Ascending aorta (tissue), 2 donors: ENCODE measurements at regions of chr1 and their contacts with region 1.

Region 1: GRCh38 chr1:174743654-174744561 is 255.8 kb upstream of the CACYBP start:
- DNase-seq: no peak
- H3K4me3 ChIP-seq: no peak overlapping the region
- H3K27ac ChIP-seq: no peak overlapping the region
- H3K4me1 ChIP-seq: no peaks in the 10 kb centered on the region
- H3K27me3 ChIP-seq: no peaks in the 10 kb centered on the region
- CTCF ChIP-seq: peak; percentile 33 to 58 (median 48)

Region 2: GRCh38 chr1:174258148-174258550 is 485.8 kb before region 1 on chr1:
- intact Hi-C with region 1: loop called (anchors 2 kb)
- DNase-seq: no peak
- H3K4me3 ChIP-seq: no peak overlapping the region
- H3K27ac ChIP-seq: no peak overlapping the region
- H3K4me1 ChIP-seq: no peaks in the 10 kb centered on the region
- H3K27me3 ChIP-seq: no peaks in the 10 kb centered on the region
- CTCF ChIP-seq: peak; percentile 15 to 43 (median 19)

Region 3: GRCh38 chr1:174671826-174672225 is 72.1 kb before region 1 on chr1:
- intact Hi-C with region 1: no loop called
- DNase-seq: no peak
- H3K4me3 ChIP-seq: no peak overlapping the region
- H3K27ac ChIP-seq: no peak overlapping the region
- H3K4me1 ChIP-seq: no peaks in the 10 kb centered on the region
- H3K27me3 ChIP-seq: no peaks in the 10 kb centered on the region
- CTCF ChIP-seq: no peak